ENCODE measurements at regions of chr3 and their contacts with region 1.

Region 1: GRCh38 chr3:62601238-62601931 is 228.0 kb upstream of the FEZF2 start:
- DNase-seq: peak in 1 of 2 donors; percentile 52
- H3K4me3 ChIP-seq: no peak overlapping the region
- CTCF ChIP-seq: no peak
- POLR2A ChIP-seq: no peak

Region 2: GRCh38 chr3:62644493-62644892 is 43.1 kb after region 1 on chr3:
- intact Hi-C with region 1: loop called (anchors 2 kb)
- DNase-seq: no peak
- H3K4me3 ChIP-seq: no peak overlapping the region
- CTCF ChIP-seq: no peak
- POLR2A ChIP-seq: no peak

Measured in lower leg skin (tissue), 4 donors.